Caco-2 (cell line): ENCODE measurements at regions of chr11 and their contacts with region 1.

Region 1: DNA sequence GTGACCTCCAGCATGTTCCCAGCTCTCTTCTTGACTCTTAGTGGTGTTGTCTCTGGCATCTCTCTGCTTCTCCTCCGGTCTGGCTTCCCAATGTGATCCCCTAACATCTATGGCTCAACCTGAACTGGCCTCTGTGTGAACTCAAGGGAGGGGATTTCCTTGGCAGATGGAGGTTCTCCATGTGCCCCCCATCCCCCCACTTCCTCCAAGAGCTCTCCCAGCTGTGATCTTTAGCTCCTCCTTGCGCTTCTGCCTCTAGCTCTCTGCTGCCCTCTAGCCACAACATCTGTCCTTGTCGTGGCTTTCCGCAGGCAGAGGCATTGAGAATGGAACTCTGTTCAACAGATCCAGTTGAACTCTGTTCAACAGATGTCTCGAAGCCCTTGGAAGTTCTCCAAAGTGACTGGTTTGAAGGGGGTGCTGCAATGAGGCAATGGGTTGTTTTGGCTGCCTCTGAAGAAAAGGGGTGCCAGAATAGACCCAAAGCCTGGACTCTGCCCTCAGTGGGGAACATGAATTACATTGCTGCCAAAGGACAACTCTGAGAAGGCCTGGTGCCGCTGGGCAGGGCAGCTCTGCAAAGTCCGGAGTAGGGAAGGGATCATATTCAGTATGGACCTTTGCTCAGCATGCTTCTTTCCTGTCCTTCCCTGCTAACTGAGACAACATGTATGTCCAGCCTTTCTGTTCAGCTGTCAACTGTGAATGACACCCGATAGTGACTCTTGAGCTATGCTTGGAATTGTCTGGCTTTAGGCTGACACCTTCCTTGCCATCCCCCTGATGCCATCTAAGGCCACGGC is 61.9 kb downstream of the ADM start:
- DNase-seq: peak; percentile 91 to 94
- H3K4me3 ChIP-seq: no peak overlapping the region
- H3K4me3 Mint-ChIP-seq: peak overlapping the region; percentile 42
- H3K27ac Mint-ChIP-seq: peak overlapping the region; percentile 69
- H3K4me1 ChIP-seq: peaks cover 15% of the 10 kb centered on the region
- H3K4me1 Mint-ChIP-seq: peaks cover 11% of the 10 kb centered on the region
- H3K27me3 ChIP-seq: no peaks in the 10 kb centered on the region
- H3K27me3 Mint-ChIP-seq: no peaks in the 10 kb centered on the region
- CTCF ChIP-seq: peak; percentile 92 to 94

Region 2: GRCh38 chr11:9982800-9983579 is 383.8 kb before region 1 on chr11:
- CTCF ChIA-PET with region 1: interaction called, 3 read pairs
- POLR2A ChIA-PET with region 1: no interaction called
- intact Hi-C with region 1: loop called (anchors 5 kb)
- DNase-seq: peak; percentile 67 to 90
- H3K4me3 ChIP-seq: no peak overlapping the region
- H3K4me3 Mint-ChIP-seq: no peak overlapping the region
- H3K27ac Mint-ChIP-seq: peak overlapping the region; percentile 91
- H3K4me1 ChIP-seq: peaks cover 15% of the 10 kb centered on the region
- H3K4me1 Mint-ChIP-seq: peaks cover 12% of the 10 kb centered on the region
- H3K27me3 ChIP-seq: no peaks in the 10 kb centered on the region
- H3K27me3 Mint-ChIP-seq: no peaks in the 10 kb centered on the region
- CTCF ChIP-seq: no peak

Region 3: GRCh38 chr11:10208131-10208575 is 158.6 kb before region 1 on chr11:
- CTCF ChIA-PET with region 1: interaction called, 7 read pairs
- POLR2A ChIA-PET with region 1: no interaction called
- intact Hi-C with region 1: loop called (anchors 1 kb)
- DNase-seq: peak in 1 of 2 experiments; percentile 58
- H3K4me3 ChIP-seq: no peak overlapping the region
- H3K4me3 Mint-ChIP-seq: no peak overlapping the region
- H3K27ac Mint-ChIP-seq: no peak overlapping the region
- H3K4me1 ChIP-seq: no peaks in the 10 kb centered on the region; the same call in 1 of the 2 replicates
- H3K4me1 Mint-ChIP-seq: peaks cover 7% of the 10 kb centered on the region
- H3K27me3 ChIP-seq: no peaks in the 10 kb centered on the region
- H3K27me3 Mint-ChIP-seq: no peaks in the 10 kb centered on the region
- CTCF ChIP-seq: peak; percentile 64 to 70

Region 4: GRCh38 chr11:10328314-10329090 is 38.3 kb before region 1 on chr11:
- CTCF ChIA-PET with region 1: interaction called, 39 read pairs
- POLR2A ChIA-PET with region 1: interaction called, 4 read pairs
- intact Hi-C with region 1: loop called (anchors 1 kb)
- DNase-seq: peak; percentile 66 to 73
- H3K4me3 ChIP-seq: no peak overlapping the region
- H3K4me3 Mint-ChIP-seq: peak overlapping the region; percentile 39
- H3K27ac Mint-ChIP-seq: peak overlapping the region; percentile 14
- H3K4me1 ChIP-seq: peaks cover 63% of the 10 kb centered on the region
- H3K4me1 Mint-ChIP-seq: peaks cover 36% of the 10 kb centered on the region
- H3K27me3 ChIP-seq: no peaks in the 10 kb centered on the region
- H3K27me3 Mint-ChIP-seq: no peaks in the 10 kb centered on the region
- CTCF ChIP-seq: no peak

Region 5: GRCh38 chr11:10351768-10352641 is 14.8 kb before region 1 on chr11:
- CTCF ChIA-PET with region 1: interaction called, 20 read pairs
- POLR2A ChIA-PET with region 1: no interaction called
- intact Hi-C with region 1: loop called (anchors 1 kb)
- DNase-seq: peak in 1 of 2 experiments; percentile 81
- H3K4me3 ChIP-seq: peak overlapping the region; percentile 20
- H3K4me3 Mint-ChIP-seq: peak overlapping the region; percentile 42
- H3K27ac Mint-ChIP-seq: peak overlapping the region; percentile 22
- H3K4me1 ChIP-seq: peaks cover 47% of the 10 kb centered on the region
- H3K4me1 Mint-ChIP-seq: peaks cover 14% of the 10 kb centered on the region
- H3K27me3 ChIP-seq: no peaks in the 10 kb centered on the region
- H3K27me3 Mint-ChIP-seq: no peaks in the 10 kb centered on the region
- CTCF ChIP-seq: no peak

Region 6: GRCh38 chr11:10387206-10388083 is 20.7 kb after region 1 on chr11:
- CTCF ChIA-PET with region 1: interaction called, 16 read pairs
- POLR2A ChIA-PET with region 1: no interaction called
- intact Hi-C with region 1: loop called (anchors 1 kb)
- DNase-seq: peak; percentile 48 to 72
- H3K4me3 ChIP-seq: no peak overlapping the region
- H3K4me3 Mint-ChIP-seq: peak overlapping the region; percentile 62
- H3K27ac Mint-ChIP-seq: peak overlapping the region; percentile 71
- H3K4me1 ChIP-seq: peaks cover 60% of the 10 kb centered on the region
- H3K4me1 Mint-ChIP-seq: peaks cover 55% of the 10 kb centered on the region
- H3K27me3 ChIP-seq: no peaks in the 10 kb centered on the region
- H3K27me3 Mint-ChIP-seq: no peaks in the 10 kb centered on the region
- CTCF ChIP-seq: no peak

Region 7: GRCh38 chr11:10405855-10406592 is 39.3 kb after region 1 on chr11:
- CTCF ChIA-PET with region 1: interaction called, 10 read pairs
- POLR2A ChIA-PET with region 1: no interaction called
- intact Hi-C with region 1: loop called (anchors 1 kb)
- DNase-seq: peak; percentile 80 to 84
- H3K4me3 ChIP-seq: no peak overlapping the region
- H3K4me3 Mint-ChIP-seq: no peak overlapping the region
- H3K27ac Mint-ChIP-seq: peak overlapping the region; percentile 74
- H3K4me1 ChIP-seq: peaks cover 14% of the 10 kb centered on the region
- H3K4me1 Mint-ChIP-seq: peaks cover 16% of the 10 kb centered on the region
- H3K27me3 ChIP-seq: no peaks in the 10 kb centered on the region
- H3K27me3 Mint-ChIP-seq: no peaks in the 10 kb centered on the region
- CTCF ChIP-seq: peak; percentile 74 to 81